ENCODE measurements at regions of chr5 and their contacts with region 1.

Region 1: GRCh38 chr5:59673438-59674058 is 220.0 kb downstream of the PDE4D start:
- DNase-seq: peak in 1 of 35 experiments; percentile 56
- ATAC-seq: no peak
- H3K4me3 ChIP-seq: no peak overlapping the region
- H3K4me3 Mint-ChIP-seq: no peak overlapping the region
- H3K27ac ChIP-seq: no peak overlapping the region
- H3K27ac Mint-ChIP-seq: no peak overlapping the region
- H3K4me1 ChIP-seq: no peaks in the 10 kb centered on the region
- H3K4me1 Mint-ChIP-seq: no peaks in the 10 kb centered on the region
- H3K27me3 ChIP-seq: no peaks in the 10 kb centered on the region
- H3K27me3 Mint-ChIP-seq: peaks cover 0 to 3% of the 10 kb centered on the region in 2 donors

Region 2: GRCh38 chr5:59107692-59108091 is 565.9 kb before region 1 on chr5:
- CTCF ChIA-PET with region 1: interaction called in 1 of 2 experiments, 12 read pairs
- POLR2A ChIA-PET with region 1: no interaction called
- DNase-seq: peak in 1 of 35 experiments; percentile 18
- ATAC-seq: no peak
- H3K4me3 ChIP-seq: no peak overlapping the region
- H3K4me3 Mint-ChIP-seq: no peak overlapping the region
- H3K27ac ChIP-seq: no peak overlapping the region
- H3K27ac Mint-ChIP-seq: no peak overlapping the region
- H3K4me1 ChIP-seq: peaks cover 0 to 27% of the 10 kb centered on the region in 2 experiments
- H3K4me1 Mint-ChIP-seq: peaks cover 12 to 23% (median 21%) of the 10 kb centered on the region in 3 donors
- H3K27me3 ChIP-seq: no peaks in the 10 kb centered on the region
- H3K27me3 Mint-ChIP-seq: no peaks in the 10 kb centered on the region

Region 3: DNA sequence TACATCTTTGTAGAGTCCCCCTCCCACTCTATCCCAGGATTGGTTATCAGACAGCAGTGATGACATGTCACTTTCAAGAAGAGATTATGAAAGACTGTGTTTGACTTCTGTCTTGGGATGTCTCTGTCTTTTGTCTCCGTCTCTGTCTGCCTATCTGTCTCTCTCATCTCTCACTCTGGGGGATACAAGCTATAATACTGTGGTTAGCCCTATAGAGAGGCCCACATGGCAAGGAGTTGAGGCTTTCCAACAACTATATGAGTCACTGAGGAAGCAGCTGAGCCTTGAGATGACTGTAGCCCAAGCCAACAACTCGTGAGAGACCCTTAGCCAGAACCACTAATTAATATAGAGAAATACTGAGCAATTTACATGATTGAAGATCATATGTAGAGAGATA is 64.8 kb before region 1 on chr5:
- CTCF ChIA-PET with region 1: no interaction called
- POLR2A ChIA-PET with region 1: no interaction called
- DNase-seq: no peak
- ATAC-seq: no peak
- H3K4me3 ChIP-seq: no peak overlapping the region
- H3K4me3 Mint-ChIP-seq: no peak overlapping the region
- H3K27ac ChIP-seq: no peak overlapping the region
- H3K27ac Mint-ChIP-seq: no peak overlapping the region
- H3K4me1 ChIP-seq: no peaks in the 10 kb centered on the region
- H3K4me1 Mint-ChIP-seq: no peaks in the 10 kb centered on the region
- H3K27me3 ChIP-seq: no peaks in the 10 kb centered on the region
- H3K27me3 Mint-ChIP-seq: peaks cover 4 to 5% of the 10 kb centered on the region in 2 donors

Region 4: GRCh38 chr5:59704936-59705335 is 31.4 kb after region 1 on chr5:
- CTCF ChIA-PET with region 1: no interaction called
- POLR2A ChIA-PET with region 1: no interaction called
- DNase-seq: no peak
- ATAC-seq: no peak
- H3K4me3 ChIP-seq: no peak overlapping the region
- H3K4me3 Mint-ChIP-seq: no peak overlapping the region
- H3K27ac ChIP-seq: no peak overlapping the region
- H3K27ac Mint-ChIP-seq: no peak overlapping the region
- H3K4me1 ChIP-seq: no peaks in the 10 kb centered on the region
- H3K4me1 Mint-ChIP-seq: no peaks in the 10 kb centered on the region
- H3K27me3 ChIP-seq: no peaks in the 10 kb centered on the region
- H3K27me3 Mint-ChIP-seq: peaks cover 0 to 4% of the 10 kb centered on the region in 2 donors

Measured in T-cell (primary cell).